Activated CD8-positive, alpha-beta memory T cell treated with anti-CD3 and anti-CD28 coated beads, Interleukin-2, amount 10 ng/mL, durations not matched to agents 7 days and 5 days (primary cell): ENCODE measurements at regions of chr5 and their contacts with region 1.

Region 1: GRCh38 chr5:177113566-177114424 is 19.8 kb upstream of the NSD1 start:
- DNase-seq: peak; percentile 86
- ATAC-seq: peak; percentile 60
- H3K4me3 Mint-ChIP-seq: no peak overlapping the region
- H3K27ac Mint-ChIP-seq: peak overlapping the region; percentile 60
- H3K4me1 Mint-ChIP-seq: peaks cover 30% of the 10 kb centered on the region
- H3K27me3 Mint-ChIP-seq: no peaks in the 10 kb centered on the region

Region 2: GRCh38 chr5:175778951-175779538 is 1334.8 kb before region 1 on chr5:
- CTCF ChIA-PET with region 1: no interaction called
- DNase-seq: no peak
- ATAC-seq: no peak
- H3K4me3 Mint-ChIP-seq: no peak overlapping the region
- H3K27ac Mint-ChIP-seq: no peak overlapping the region
- H3K4me1 Mint-ChIP-seq: no peaks in the 10 kb centered on the region
- H3K27me3 Mint-ChIP-seq: peaks cover 31% of the 10 kb centered on the region

Region 3: DNA sequence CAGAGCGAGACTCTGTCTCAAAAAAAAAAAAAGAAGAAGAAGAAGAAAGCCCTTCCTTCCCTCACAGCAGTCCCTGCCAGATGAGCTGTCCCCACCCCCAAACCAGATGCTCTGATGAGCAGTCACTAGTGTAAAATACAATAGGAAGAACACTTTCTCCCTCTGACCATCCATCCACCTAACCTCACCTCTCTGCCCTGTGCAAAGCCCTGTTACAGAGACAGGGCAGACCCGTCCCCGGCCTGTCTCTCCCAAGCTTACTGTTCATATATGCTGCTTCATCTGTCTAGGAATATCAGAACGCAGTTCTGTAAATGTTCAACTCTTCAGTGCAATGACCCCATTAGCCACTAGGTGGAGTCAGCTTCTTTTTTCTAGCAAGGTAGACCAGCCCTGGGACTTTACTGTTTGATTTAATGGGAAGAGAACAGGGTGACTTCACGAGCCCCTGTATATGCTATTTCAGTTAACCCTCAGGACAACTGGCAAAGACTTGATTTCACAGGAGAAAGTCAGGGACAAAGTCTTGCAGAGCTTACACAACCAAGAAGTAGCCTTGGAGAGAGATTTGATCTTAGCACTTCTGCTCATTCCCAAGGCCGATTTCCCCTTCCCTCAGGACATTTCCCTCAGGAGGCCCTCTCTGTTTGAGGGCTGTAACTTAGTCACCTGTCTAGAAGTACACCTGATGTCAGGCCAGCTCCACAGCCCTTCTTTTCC is 42.0 kb before region 1 on chr5:
- CTCF ChIA-PET with region 1: interaction called, 93 read pairs
- DNase-seq: peak; percentile 76
- ATAC-seq: peak; percentile 79
- H3K4me3 Mint-ChIP-seq: no peak overlapping the region
- H3K27ac Mint-ChIP-seq: peak overlapping the region; percentile 34
- H3K4me1 Mint-ChIP-seq: peaks cover 11% of the 10 kb centered on the region
- H3K27me3 Mint-ChIP-seq: no peaks in the 10 kb centered on the region

Region 4: GRCh38 chr5:177124486-177124991 is 10.7 kb after region 1 on chr5:
- CTCF ChIA-PET with region 1: interaction called, 52 read pairs
- DNase-seq: no peak
- ATAC-seq: no peak
- H3K4me3 Mint-ChIP-seq: no peak overlapping the region
- H3K27ac Mint-ChIP-seq: no peak overlapping the region
- H3K4me1 Mint-ChIP-seq: peaks cover 16% of the 10 kb centered on the region
- H3K27me3 Mint-ChIP-seq: no peaks in the 10 kb centered on the region

Region 5: DNA sequence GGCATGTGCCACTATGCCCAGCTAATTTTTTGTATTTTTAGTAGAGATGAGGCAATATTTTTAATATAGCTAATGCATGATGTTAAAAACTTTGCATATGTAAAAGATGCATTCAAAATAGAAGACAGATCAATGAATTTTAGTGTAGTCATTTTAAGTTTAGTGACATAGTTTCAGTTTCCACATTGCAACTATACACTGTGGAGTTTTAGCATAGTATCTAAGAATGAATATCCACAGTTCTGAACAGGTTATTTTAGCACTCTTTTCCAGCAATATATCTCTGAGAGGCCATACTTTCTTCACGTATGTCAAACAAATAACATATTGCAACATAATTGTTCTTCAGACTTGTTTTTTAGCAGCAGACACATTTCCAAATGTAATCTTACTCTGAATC is 150.4 kb after region 1 on chr5:
- CTCF ChIA-PET with region 1: interaction called, 10 read pairs
- DNase-seq: no peak
- ATAC-seq: no peak
- H3K4me3 Mint-ChIP-seq: no peak overlapping the region
- H3K27ac Mint-ChIP-seq: no peak overlapping the region
- H3K4me1 Mint-ChIP-seq: peaks cover 10% of the 10 kb centered on the region
- H3K27me3 Mint-ChIP-seq: no peaks in the 10 kb centered on the region

Region 6: DNA sequence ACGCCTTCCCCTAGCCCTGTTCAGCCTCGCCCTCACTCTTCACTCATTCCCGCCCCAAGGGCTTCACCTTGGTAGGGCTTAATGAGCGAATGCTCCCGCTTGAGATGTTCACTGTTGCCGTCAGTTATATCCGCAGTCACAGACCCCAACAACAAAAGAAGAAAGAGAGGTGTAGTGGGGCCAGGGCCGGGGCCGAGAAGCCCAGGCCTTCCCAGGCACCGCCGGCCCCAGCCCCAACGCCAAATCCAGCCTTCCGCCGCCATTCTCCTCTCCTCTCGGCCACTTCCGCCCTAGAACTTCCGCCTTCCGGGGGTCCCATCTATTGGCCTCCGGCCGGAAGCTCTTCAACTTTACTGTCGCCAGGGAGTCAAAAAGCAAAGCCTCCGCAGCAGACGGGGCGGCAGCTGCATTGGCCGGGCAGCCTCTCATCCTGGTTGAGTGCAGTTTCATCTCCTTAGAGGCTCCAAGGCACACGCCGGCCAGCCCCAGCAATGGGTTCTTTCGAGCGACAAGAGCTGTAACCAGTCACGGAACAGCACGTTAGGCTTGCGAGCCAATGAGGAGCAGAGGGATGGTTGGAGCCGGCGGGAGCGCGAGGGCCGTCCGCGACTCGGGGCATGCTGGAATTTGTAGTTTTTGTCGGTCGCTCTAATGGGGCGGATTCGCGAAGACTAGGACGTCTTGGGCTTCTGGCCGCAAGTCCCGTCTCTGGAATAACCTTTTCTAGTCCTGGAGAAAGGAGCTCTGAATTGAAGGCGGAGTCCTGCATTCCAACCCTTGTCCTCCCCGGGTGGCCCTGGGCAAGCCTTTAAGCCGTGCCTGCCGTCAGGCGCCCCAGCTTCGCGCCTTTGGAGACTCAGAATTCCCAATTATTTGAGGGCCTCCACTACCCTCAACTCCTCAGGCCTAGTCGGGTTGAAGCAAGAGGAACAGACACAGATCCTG is 237.9 kb after region 1 on chr5 and contains the start of gene LMAN2:
- CTCF ChIA-PET with region 1: interaction called, 16 read pairs
- DNase-seq: peak; percentile 96
- ATAC-seq: peak; percentile 99
- H3K4me3 Mint-ChIP-seq: peak within 1 kb of the TSS; percentile 98
- H3K27ac Mint-ChIP-seq: peak within 1 kb of the TSS; percentile 100
- H3K4me1 Mint-ChIP-seq: peaks cover 65% of the 10 kb centered on the region
- H3K27me3 Mint-ChIP-seq: no peaks in the 10 kb centered on the region
- total RNA-seq, gene LMAN2: 133 to 140 TPM